ENCODE measurements at regions of chr9 and their contacts with region 1.

Region 1: GRCh38 chr9:10447036-10447435 is 165.8 kb downstream of the PTPRD start:
- DNase-seq: no peak
- H3K4me3 ChIP-seq: no peak overlapping the region
- H3K27ac ChIP-seq: no peak overlapping the region
- H3K4me1 ChIP-seq: no peaks in the 10 kb centered on the region
- H3K27me3 ChIP-seq: no peaks in the 10 kb centered on the region
- CTCF ChIP-seq: no peak
- POLR2A ChIP-seq: no peak

Region 2: DNA sequence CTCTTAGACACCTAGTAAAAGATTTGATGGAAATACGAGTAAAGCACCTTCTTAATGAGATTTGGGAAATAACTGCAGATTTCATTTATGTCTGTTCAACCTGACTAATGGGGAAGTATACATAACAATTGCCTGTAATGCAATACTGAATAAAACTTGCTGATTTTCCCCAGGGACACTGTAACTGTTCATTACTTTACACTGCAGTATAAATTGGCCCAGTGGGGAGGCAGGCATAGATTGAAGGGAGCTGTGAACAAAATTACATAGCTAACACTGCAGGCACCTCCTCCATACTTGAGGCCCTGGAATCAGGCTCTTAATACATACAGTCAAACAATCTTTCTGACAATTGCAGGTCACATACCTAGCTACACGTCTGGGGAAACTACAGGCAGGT is 50.4 kb before region 1 on chr9:
- intact Hi-C with region 1: no loop called
- DNase-seq: no peak
- H3K4me3 ChIP-seq: no peak overlapping the region
- H3K27ac ChIP-seq: no peak overlapping the region
- H3K4me1 ChIP-seq: no peaks in the 10 kb centered on the region
- H3K27me3 ChIP-seq: no peaks in the 10 kb centered on the region
- CTCF ChIP-seq: no peak
- POLR2A ChIP-seq: no peak

Region 3: DNA sequence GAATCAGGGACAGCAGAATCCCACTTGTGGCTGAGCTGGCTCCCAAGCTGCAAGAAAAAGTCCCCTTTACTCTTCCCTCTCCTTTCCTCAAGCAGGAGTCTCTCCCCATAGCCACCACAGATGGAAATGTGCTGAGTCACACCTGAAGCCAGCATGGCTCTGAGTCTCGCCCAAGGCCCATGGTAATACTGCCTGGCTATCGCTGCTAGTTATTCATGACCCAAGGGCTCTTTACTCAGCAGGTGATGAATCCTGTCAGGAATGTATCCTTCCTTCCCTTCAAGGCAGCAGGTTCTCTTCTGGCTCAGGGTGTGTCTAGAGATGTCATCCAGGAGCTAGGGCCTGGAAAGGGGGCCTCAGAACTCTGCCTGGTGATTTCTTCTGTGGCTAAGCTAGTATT is 569.0 kb after region 1 on chr9:
- intact Hi-C with region 1: loop called in 1 of 2 experiments (anchors 10 kb)
- DNase-seq: no peak
- H3K4me3 ChIP-seq: no peak overlapping the region
- H3K27ac ChIP-seq: no peak overlapping the region
- H3K4me1 ChIP-seq: no peaks in the 10 kb centered on the region
- H3K27me3 ChIP-seq: no peaks in the 10 kb centered on the region
- CTCF ChIP-seq: no peak
- POLR2A ChIP-seq: no peak

Measured in adrenal gland (tissue), 19 donors.